Panc1 (cell line): ENCODE measurements at regions of chr1 and their contacts with region 1.

Region 1: GRCh38 chr1:21534674-21535378 is 25.6 kb downstream of the ALPL start:
- DNase-seq: peak; percentile 28
- ATAC-seq: peak; percentile 86
- H3K4me3 ChIP-seq: no peak overlapping the region
- H3K27ac ChIP-seq: no peak overlapping the region
- H3K4me1 ChIP-seq: no peaks in the 10 kb centered on the region
- H3K27me3 ChIP-seq: no peaks in the 10 kb centered on the region
- CTCF ChIP-seq: peak; percentile 85

Region 2: GRCh38 chr1:21511579-21512522 is 23.0 kb before region 1 on chr1:
- CTCF ChIA-PET with region 1: interaction called, 5 read pairs
- POLR2A ChIA-PET with region 1: interaction called, 21 read pairs
- in situ Hi-C with region 1: no loop called
- intact Hi-C with region 1: no loop called
- DNase-seq: no peak
- ATAC-seq: no peak
- H3K4me3 ChIP-seq: no peak overlapping the region
- H3K27ac ChIP-seq: no peak overlapping the region
- H3K4me1 ChIP-seq: peaks cover 3% of the 10 kb centered on the region; the same call in 1 of the 2 replicates
- H3K27me3 ChIP-seq: no peaks in the 10 kb centered on the region
- CTCF ChIP-seq: no peak

Region 3: DNA sequence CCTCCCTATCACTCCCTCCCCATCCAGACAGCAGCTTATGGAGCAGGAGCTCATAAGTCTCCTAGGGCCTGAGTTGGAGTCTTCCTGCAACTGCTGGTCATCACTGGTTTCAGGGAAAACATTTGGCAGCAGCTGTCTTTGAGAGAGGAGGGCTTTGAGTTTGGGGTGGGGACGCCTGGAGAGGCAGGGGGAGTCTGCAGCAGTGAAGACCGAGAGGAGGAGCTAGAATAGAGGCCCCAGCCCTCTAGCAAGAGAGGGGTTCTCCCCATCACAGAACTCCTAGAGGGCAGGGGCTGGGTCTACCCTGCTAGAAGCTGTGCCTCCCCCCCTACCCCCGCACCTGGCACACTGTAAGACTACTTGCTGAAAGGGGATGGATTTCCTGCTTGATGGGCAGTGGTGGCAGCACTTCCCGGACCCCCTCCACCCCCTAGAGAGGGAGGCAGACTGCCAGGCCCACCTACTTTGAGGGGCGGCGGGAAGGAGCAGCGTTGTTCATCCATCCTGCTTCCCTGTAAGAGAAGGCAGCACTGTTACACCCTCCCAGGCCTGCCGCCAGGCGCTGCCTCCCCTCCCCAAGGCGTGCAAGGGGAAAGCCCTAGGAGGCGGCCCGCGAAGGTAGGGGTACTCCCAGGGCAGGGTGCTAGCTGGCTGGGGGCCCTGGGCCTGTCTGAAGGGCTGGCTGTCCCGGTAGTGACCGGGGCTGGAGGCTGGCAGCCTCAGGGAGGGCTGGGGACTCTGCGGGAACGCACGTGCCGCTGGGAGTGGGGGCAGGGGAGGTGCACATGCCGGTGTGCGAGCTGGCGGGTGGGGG is 83.9 kb after region 1 on chr1:
- CTCF ChIA-PET with region 1: no interaction called
- POLR2A ChIA-PET with region 1: no interaction called
- in situ Hi-C with region 1: no loop called
- intact Hi-C with region 1: no loop called
- DNase-seq: no peak
- ATAC-seq: no peak
- H3K4me3 ChIP-seq: no peak overlapping the region
- H3K27ac ChIP-seq: no peak overlapping the region
- H3K4me1 ChIP-seq: no peaks in the 10 kb centered on the region; the same call in 1 of the 2 replicates
- H3K27me3 ChIP-seq: no peaks in the 10 kb centered on the region
- CTCF ChIP-seq: no peak

Region 4: DNA sequence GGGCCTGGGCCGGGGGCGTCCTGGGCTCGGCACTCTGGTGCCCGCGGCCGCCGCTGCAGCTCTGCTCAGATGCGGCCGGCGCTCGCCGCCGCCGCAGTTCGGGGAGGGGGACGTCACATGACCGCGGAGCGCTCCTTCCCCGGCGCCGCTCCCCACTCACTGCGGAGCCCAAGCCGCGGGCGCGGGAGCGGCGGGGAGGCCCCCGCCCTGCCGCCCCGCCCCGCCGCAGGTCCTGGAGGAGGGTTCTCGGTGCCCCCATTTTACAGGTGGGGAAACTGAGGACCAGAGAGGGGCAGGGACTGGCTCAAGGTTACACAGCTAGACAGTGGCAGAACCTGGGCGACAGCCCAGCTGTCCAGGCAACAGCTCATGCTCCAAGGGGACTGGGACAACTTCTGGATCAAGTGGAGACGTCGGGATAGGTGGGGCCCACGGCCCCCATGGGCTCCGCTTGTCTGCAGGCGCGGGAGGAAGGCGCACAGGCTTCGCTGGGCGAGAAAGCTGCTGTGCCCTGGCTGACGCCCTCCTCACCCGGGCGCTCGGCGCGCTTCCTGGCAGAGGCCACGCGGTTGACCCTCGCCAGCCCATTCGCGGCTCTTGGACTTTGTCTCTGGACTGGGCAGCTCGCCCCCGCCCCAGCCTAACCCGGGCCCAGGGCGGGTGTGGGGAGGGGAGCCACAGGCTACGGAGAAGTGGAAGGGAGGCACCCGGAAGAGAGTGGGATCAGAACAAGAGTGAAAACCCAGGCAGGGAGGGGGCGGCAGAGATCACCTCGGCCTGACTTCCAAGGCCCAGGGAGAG is 134.6 kb after region 1 on chr1 and contains the start of gene RAP1GAP:
- CTCF ChIA-PET with region 1: no interaction called
- POLR2A ChIA-PET with region 1: no interaction called
- in situ Hi-C with region 1: no loop called
- intact Hi-C with region 1: no loop called
- DNase-seq: no peak
- ATAC-seq: peak; percentile 61
- H3K4me3 ChIP-seq: peak within 1 kb of the TSS; percentile 37 to 59
- H3K27ac ChIP-seq: peak within 1 kb of the TSS; percentile 39
- H3K4me1 ChIP-seq: peaks cover 15% of the 10 kb centered on the region
- H3K27me3 ChIP-seq: no peaks in the 10 kb centered on the region
- CTCF ChIP-seq: no peak; the same call in 1 of the 2 replicates
- total RNA-seq, gene RAP1GAP: 4.6 TPM

Region 5: DNA sequence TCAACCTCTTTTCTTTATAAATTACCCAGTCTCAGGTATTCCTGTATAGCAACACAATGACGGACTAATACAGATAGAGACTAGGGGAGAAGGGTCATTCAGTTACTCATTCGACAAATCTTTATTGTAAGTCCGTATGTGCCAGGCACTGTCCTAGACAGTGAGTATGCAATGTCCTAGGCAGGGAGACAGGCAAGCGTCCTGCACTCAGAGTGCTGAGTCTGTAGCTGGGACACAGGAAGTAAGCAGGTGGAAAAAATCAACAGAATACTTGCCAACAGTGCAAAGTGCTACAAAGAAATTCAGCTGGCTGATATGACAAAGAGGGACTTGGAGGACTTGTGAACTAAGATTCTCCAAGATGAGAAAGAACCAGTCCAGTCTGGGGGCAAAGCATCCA is 824.6 kb after region 1 on chr1:
- CTCF ChIA-PET with region 1: no interaction called
- POLR2A ChIA-PET with region 1: interaction called, 20 read pairs
- in situ Hi-C with region 1: no loop called
- intact Hi-C with region 1: no loop called
- DNase-seq: no peak
- ATAC-seq: no peak
- H3K4me3 ChIP-seq: no peak overlapping the region
- H3K27ac ChIP-seq: no peak overlapping the region
- H3K4me1 ChIP-seq: no peaks in the 10 kb centered on the region
- H3K27me3 ChIP-seq: peaks cover 19% of the 10 kb centered on the region
- CTCF ChIP-seq: no peak